ENCODE measurements at regions of chr12 and their contacts with region 1.

Region 1: DNA sequence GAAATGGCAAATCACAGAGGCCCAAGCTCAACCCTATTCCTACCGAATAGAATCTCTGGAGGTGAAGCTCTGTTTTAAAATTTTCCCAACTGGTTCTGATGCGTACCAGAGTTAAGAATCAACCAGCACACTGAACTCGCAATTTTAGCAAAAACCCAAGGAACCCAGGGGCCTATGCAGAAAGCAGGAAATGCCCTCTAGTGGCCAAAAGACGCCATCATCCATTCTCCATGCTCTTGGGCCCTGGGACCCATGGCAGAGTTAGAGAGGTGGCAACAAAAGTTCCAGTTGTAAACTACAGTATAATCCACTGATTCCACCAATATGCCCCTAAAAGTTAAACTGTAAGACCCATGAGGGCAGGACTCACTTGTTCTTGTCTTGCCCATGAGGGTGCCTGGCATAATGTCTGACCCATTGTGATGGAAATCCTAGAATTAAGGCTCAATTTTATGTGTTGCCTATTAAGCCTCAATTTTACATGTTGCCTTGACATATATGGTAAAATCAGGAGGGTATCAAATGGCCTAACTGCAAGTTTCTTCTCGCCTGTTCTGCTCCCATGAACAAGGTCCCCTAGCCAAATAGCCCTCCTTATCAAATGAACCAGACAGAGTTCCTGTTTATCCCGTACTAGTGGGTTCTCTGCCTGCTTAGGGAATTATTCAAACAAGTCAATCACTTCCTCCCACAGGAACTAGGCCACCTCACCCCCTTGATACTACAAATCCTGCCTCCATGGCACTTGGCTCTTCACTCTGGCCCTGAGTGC is 137.5 kb upstream of the CPM start:
- DNase-seq: peak in 1 of 2 donors; percentile 21
- ATAC-seq: peak; percentile 46 to 47
- H3K4me3 ChIP-seq: no peak overlapping the region
- H3K27ac ChIP-seq: no peak overlapping the region
- H3K4me1 ChIP-seq: no peaks in the 10 kb centered on the region
- H3K27me3 ChIP-seq: no peaks in the 10 kb centered on the region
- CTCF ChIP-seq: peak; percentile 45 to 73 (median 55)
- POLR2A ChIP-seq: no peak

Region 2: GRCh38 chr12:68844318-68844745 is 226.2 kb before region 1 on chr12:
- in situ Hi-C with region 1: no loop called
- intact Hi-C with region 1: no loop called
- DNase-seq: no peak
- ATAC-seq: no peak
- H3K4me3 ChIP-seq: no peak overlapping the region
- H3K27ac ChIP-seq: no peak overlapping the region
- H3K4me1 ChIP-seq: no peaks in the 10 kb centered on the region
- H3K27me3 ChIP-seq: no peaks in the 10 kb centered on the region
- CTCF ChIP-seq: no peak
- POLR2A ChIP-seq: no peak

Region 3: DNA sequence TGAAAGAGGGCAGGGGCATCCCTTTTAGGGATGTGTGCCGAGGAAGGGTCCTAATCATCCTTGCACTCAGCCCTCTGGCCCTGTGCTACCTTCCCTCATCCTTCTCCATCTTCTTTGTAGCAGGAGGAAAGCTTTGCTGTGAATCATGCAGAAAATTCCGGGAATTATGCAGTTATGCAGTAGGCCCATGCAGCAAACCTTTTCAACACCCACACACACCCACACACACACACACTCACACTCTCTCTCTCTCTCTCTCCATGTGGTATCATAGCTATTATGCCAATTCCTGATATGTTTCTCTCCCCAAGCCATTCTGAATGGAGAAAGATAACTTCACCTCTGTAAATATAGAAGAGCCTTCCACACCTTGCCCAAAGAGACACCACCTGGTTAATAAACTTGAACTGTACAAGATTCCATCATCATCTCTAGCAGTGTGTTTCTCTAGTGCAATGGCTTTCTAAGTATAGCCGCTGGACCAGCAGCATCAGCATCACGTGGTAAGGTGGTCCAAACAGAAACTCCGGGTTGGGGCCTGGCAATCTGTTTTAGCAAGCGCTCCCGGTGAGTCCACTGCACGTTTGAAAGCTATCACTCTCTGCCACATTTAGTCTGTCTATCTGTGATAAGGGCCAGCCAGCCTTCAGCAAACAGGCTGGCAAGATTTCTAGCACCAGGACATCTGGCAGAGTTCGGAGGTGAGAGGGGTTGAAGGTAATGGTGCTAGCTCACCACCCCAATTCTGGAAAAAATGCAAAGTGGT is 204.9 kb before region 1 on chr12:
- in situ Hi-C with region 1: loop called in 2 of 4 experiments (anchors 10 to 25 kb)
- intact Hi-C with region 1: loop called (anchors 2 kb)
- DNase-seq: no peak
- ATAC-seq: no peak
- H3K4me3 ChIP-seq: no peak overlapping the region
- H3K27ac ChIP-seq: no peak overlapping the region
- H3K4me1 ChIP-seq: no peaks in the 10 kb centered on the region
- H3K27me3 ChIP-seq: no peaks in the 10 kb centered on the region
- CTCF ChIP-seq: no peak
- POLR2A ChIP-seq: no peak

Region 4: GRCh38 chr12:68871921-68872320 is 198.6 kb before region 1 on chr12:
- in situ Hi-C with region 1: loop called in 2 of 4 experiments (anchors 10 to 25 kb)
- intact Hi-C with region 1: no loop called
- DNase-seq: no peak
- ATAC-seq: no peak
- H3K4me3 ChIP-seq: no peak overlapping the region
- H3K27ac ChIP-seq: no peak overlapping the region
- H3K4me1 ChIP-seq: no peaks in the 10 kb centered on the region
- H3K27me3 ChIP-seq: no peaks in the 10 kb centered on the region
- CTCF ChIP-seq: no peak
- POLR2A ChIP-seq: no peak